ENCODE measurements at regions of chr12 and their contacts with region 1.

Region 1: GRCh38 chr12:43112101-43112920 is 439.7 kb downstream of the ADAMTS20 start:
- DNase-seq: no peak
- H3K4me3 ChIP-seq: no peak overlapping the region
- H3K27ac ChIP-seq: no peak overlapping the region
- H3K4me1 ChIP-seq: no peaks in the 10 kb centered on the region
- H3K27me3 ChIP-seq: no peaks in the 10 kb centered on the region
- CTCF ChIP-seq: no peak

Region 2: DNA sequence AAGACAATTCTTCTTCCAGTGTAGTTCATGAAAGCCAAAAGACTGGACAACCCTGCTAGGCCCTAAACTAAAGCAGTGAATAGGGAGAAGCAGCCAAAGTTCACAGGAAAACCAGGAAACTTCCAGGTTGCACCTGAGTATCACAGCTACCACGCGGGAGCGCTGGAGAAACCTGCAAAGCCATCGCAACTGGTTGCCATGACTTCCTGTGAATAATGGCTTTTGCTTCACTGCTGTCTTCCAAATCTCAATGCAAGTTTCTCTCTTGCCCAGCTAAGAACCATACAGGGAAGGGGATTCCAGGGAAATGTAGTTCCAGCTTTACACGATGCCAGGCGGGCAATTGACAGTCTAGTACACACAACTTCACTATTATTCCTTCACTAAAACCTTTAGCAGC is 1081.7 kb before region 1 on chr12:
- CTCF ChIA-PET with region 1: no interaction called
- POLR2A ChIA-PET with region 1: interaction called, 33 read pairs
- intact Hi-C with region 1: no loop called
- DNase-seq: no peak
- H3K4me3 ChIP-seq: no peak overlapping the region
- H3K27ac ChIP-seq: no peak overlapping the region
- H3K4me1 ChIP-seq: no peaks in the 10 kb centered on the region
- H3K27me3 ChIP-seq: no peaks in the 10 kb centered on the region
- CTCF ChIP-seq: no peak

Region 3: DNA sequence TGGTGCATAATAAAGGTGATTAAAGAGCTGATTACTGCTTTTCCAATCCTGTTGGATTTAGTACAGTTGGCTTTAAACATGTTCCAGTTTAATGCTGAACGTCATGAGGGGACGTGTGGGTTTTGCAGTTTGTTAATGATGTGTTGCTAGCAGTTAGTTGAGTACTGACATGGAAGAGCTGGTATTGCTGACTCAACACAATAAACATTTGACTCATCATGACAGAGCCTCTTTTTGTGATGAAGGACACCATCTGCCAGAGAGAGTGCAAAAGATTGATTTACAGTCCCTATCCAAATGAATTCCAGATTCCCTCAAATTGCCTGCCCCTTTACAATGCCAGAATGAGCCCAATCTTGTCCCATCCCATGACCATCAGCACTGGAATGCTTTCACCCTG is 176.6 kb before region 1 on chr12:
- CTCF ChIA-PET with region 1: no interaction called
- POLR2A ChIA-PET with region 1: no interaction called
- intact Hi-C with region 1: no loop called
- DNase-seq: no peak
- H3K4me3 ChIP-seq: no peak overlapping the region
- H3K27ac ChIP-seq: no peak overlapping the region
- H3K4me1 ChIP-seq: no peaks in the 10 kb centered on the region
- H3K27me3 ChIP-seq: no peaks in the 10 kb centered on the region
- CTCF ChIP-seq: no peak

Region 4: GRCh38 chr12:42992826-42993225 is 119.5 kb before region 1 on chr12:
- CTCF ChIA-PET with region 1: no interaction called
- POLR2A ChIA-PET with region 1: no interaction called
- intact Hi-C with region 1: no loop called
- DNase-seq: no peak
- H3K4me3 ChIP-seq: no peak overlapping the region
- H3K27ac ChIP-seq: no peak overlapping the region
- H3K4me1 ChIP-seq: no peaks in the 10 kb centered on the region
- H3K27me3 ChIP-seq: no peaks in the 10 kb centered on the region
- CTCF ChIP-seq: no peak